A673 (cell line): ENCODE measurements at regions of chr11 and their contacts with region 1.

Region 1: DNA sequence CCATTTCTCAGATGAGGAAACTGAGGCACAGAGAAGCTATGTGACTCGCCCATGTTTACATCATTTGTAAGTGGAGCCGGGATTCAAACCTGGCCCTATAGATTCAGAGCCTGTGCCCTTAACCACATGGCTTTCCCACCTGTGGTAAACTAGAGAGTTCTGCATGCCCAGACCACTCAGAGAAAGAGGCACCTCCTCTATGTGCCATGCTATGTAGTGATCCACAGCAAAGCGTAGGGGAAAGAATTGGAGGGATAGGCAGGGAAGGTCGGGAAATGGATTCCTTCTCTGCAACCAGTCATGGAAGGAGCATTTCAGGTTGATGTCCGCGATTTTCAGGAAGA is 15.4 kb upstream of the POU2AF2 start:
- DNase-seq: no peak
- H3K4me3 ChIP-seq: peak overlapping the region; percentile 49
- H3K27ac ChIP-seq: peak overlapping the region; percentile 62
- H3K4me1 ChIP-seq: peaks cover 11% of the 10 kb centered on the region
- H3K27me3 ChIP-seq: no peaks in the 10 kb centered on the region
- CTCF ChIP-seq: no peak

Region 2: DNA sequence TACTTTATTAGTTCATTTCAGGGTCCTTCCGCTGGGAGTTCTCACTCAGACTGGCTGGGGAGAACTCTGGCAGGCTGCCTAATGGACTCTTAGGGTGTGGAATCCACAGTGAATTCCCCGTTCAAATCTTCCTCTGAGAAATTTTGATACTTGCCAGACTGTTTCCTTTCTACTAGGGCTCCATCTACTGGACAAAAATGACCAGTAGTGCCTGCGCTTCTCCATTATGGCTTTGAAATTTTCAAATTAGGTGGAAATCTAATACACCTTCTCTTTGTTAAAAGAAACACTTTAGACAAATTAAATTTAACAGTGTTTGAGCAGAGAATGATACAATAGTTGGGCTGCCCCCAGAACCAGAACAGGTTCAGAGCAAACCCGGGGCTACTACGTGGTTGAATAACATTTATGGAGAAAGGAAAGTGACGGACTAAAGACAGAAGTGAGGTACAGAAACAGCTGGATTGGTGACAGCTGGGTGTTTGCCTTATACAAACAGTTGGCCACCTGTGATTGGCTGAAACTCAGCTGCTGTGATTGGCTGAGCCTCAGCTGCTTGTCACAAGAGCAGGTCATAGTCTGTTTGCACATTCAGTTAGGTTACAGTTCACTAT is 853.3 kb before region 1 on chr11:
- CTCF ChIA-PET with region 1: no interaction called
- POLR2A ChIA-PET with region 1: no interaction called
- intact Hi-C with region 1: loop called (anchors 10 kb)
- DNase-seq: peak; percentile 100
- H3K4me3 ChIP-seq: peak overlapping the region; percentile 11
- H3K27ac ChIP-seq: peak overlapping the region; percentile 83
- H3K4me1 ChIP-seq: peaks cover 59% of the 10 kb centered on the region
- H3K27me3 ChIP-seq: no peaks in the 10 kb centered on the region
- CTCF ChIP-seq: peak; percentile 98

Region 3: GRCh38 chr11:110613197-110613918 is 616.7 kb before region 1 on chr11:
- CTCF ChIA-PET with region 1: no interaction called
- POLR2A ChIA-PET with region 1: interaction called, 13 read pairs
- intact Hi-C with region 1: no loop called
- DNase-seq: no peak
- H3K4me3 ChIP-seq: no peak overlapping the region
- H3K27ac ChIP-seq: no peak overlapping the region
- H3K4me1 ChIP-seq: no peaks in the 10 kb centered on the region
- H3K27me3 ChIP-seq: no peaks in the 10 kb centered on the region
- CTCF ChIP-seq: no peak

Region 4: DNA sequence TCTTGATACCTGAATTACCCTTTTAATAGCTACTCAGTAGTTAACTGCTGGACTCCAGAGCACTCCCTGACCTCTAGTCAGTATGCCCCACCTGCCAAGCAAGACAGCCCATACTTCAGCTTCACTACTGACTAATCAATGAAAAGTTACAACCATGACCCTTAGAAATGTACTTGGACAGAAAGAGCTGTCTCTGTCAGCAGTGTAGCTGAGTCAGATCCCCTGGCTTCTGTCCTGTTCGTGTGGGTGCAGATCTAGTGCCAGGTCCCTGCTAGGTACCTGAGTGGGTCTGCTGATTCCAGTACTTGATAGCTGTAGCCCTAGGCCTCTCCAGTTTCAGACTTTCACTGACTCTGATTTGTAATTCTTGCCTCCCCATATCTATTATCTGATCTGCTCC is 250.4 kb before region 1 on chr11:
- CTCF ChIA-PET with region 1: no interaction called
- POLR2A ChIA-PET with region 1: no interaction called
- intact Hi-C with region 1: loop called (anchors 2 kb)
- DNase-seq: no peak
- H3K4me3 ChIP-seq: no peak overlapping the region
- H3K27ac ChIP-seq: no peak overlapping the region
- H3K4me1 ChIP-seq: peaks cover 10% of the 10 kb centered on the region
- H3K27me3 ChIP-seq: no peaks in the 10 kb centered on the region
- CTCF ChIP-seq: no peak